Activated naive CD4-positive, alpha-beta T cell treated with anti-CD3 and anti-CD28 coated beads, Interleukin-2, amount 10 ng/mL, durations not matched to agents 7 days and 5 days (primary cell): ENCODE measurements at regions of chr16 and their contacts with region 1.

Region 1: GRCh38 chr16:24010440-24011089 is 174.8 kb downstream of the PRKCB start:
- DNase-seq: peak; percentile 88
- H3K4me3 Mint-ChIP-seq: no peak overlapping the region
- H3K27ac Mint-ChIP-seq: no peak overlapping the region
- H3K4me1 Mint-ChIP-seq: peaks cover 55% of the 10 kb centered on the region
- H3K27me3 Mint-ChIP-seq: no peaks in the 10 kb centered on the region

Region 2: DNA sequence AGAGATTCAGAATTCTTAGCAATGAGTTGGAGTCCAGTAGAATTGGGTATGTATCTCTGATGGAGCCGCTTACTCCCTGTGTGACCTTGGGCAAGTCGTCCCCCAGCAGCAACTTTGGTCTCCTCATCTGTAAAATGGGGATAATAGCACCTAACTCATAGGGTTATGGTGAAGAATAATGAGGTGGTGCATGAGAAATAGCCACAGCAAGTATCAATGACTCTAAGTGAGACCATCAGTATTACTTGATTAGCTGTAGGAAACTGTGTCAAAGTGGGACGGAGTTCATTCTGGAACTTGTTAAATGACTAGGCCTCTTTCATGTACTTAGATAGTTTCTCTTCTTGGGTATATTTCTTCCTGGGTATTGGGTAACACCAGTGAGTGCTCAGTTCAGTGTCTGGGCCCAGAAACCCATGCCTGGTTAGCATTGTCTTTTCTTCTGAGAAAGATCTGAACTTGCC is 168.4 kb before region 1 on chr16:
- CTCF ChIA-PET with region 1: interaction called, 10 read pairs
- DNase-seq: no peak
- H3K4me3 Mint-ChIP-seq: no peak overlapping the region
- H3K27ac Mint-ChIP-seq: peak overlapping the region; percentile 73
- H3K4me1 Mint-ChIP-seq: peaks cover 61% of the 10 kb centered on the region
- H3K27me3 Mint-ChIP-seq: no peaks in the 10 kb centered on the region

Region 3: DNA sequence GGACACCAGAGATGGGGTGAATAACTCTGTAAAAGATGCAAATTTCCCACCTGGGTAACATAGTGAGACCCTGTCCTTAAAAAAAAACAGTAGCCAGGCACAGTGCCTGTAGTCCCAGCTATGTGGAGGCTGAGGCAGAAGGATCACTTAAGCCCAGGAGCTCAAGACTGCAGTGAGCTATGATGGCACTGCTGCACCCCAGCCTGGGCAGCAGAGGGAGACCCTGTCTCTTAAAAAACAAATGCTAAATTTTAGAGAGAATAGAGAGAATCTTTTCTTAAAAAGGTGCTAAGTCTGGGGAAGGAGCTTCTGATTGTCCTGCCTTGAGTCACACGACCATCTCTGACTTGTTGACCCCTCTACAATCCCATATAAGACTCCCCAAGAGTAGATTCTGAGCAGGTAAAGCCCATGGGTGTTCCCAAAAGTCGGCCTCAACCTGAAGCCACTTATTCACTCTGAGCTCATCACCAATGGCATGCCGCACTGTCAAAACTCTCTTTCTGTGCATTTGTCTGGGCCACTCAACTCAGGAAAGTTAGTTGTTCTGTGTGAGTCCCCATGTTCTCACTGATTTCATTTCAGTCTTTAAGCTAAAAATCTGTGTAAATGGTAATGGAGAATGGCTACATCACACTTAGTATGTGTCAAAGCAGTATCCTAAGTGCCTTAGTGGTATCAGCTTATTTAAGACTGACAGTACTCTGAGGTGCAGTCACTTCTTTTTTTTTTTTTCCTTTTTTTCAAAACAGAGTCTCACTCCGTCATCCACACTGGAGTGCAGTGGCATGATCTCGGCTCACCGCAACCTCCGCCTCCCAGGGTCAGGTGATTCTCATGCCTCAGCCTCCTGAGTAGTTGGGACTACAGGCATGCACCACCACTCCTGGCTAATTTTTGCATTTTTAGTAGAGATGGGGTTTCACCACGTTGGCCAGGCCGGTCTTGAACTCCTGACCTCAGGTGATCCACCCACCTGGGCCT is 133.2 kb before region 1 on chr16:
- CTCF ChIA-PET with region 1: interaction called, 32 read pairs
- DNase-seq: peak; percentile 29
- H3K4me3 Mint-ChIP-seq: no peak overlapping the region
- H3K27ac Mint-ChIP-seq: no peak overlapping the region
- H3K4me1 Mint-ChIP-seq: peaks cover 66% of the 10 kb centered on the region
- H3K27me3 Mint-ChIP-seq: no peaks in the 10 kb centered on the region

Region 4: GRCh38 chr16:24036614-24037013 is 26.0 kb after region 1 on chr16:
- CTCF ChIA-PET with region 1: interaction called, 18 read pairs
- DNase-seq: peak; percentile 52
- H3K4me3 Mint-ChIP-seq: no peak overlapping the region
- H3K27ac Mint-ChIP-seq: no peak overlapping the region
- H3K4me1 Mint-ChIP-seq: peaks cover 52% of the 10 kb centered on the region
- H3K27me3 Mint-ChIP-seq: no peaks in the 10 kb centered on the region

Region 5: GRCh38 chr16:24054741-24055491 is 44.4 kb after region 1 on chr16:
- CTCF ChIA-PET with region 1: no interaction called
- DNase-seq: no peak
- H3K4me3 Mint-ChIP-seq: no peak overlapping the region
- H3K27ac Mint-ChIP-seq: no peak overlapping the region
- H3K4me1 Mint-ChIP-seq: no peaks in the 10 kb centered on the region
- H3K27me3 Mint-ChIP-seq: no peaks in the 10 kb centered on the region

Region 6: GRCh38 chr16:24367186-24367710 is 356.7 kb after region 1 on chr16:
- CTCF ChIA-PET with region 1: no interaction called
- DNase-seq: no peak
- H3K4me3 Mint-ChIP-seq: no peak overlapping the region
- H3K27ac Mint-ChIP-seq: no peak overlapping the region
- H3K4me1 Mint-ChIP-seq: no peaks in the 10 kb centered on the region
- H3K27me3 Mint-ChIP-seq: peaks cover 4% of the 10 kb centered on the region